Activated T-helper 1 cell treated with anti-CD3 and anti-CD28 coated beads, Interleukin-12 subunit alpha, Interleukin-12 subunit beta, Interleukin-2, Interleukin-4 antibody, amounts not matched to agents 30 ng/mL and 10 ng/mL and 1 ng/mL, durations not matched to agents 14 hours and 24 hours and 36 hours (primary cell): ENCODE measurements at regions of chr11 and their contacts with region 1.

Region 1: GRCh38 chr11:11569936-11570491 is 51.8 kb downstream of the GALNT18 start:
- DNase-seq: no peak
- H3K4me3 Mint-ChIP-seq: no peak overlapping the region
- H3K27ac Mint-ChIP-seq: no peak overlapping the region
- H3K4me1 Mint-ChIP-seq: peaks cover 30% of the 10 kb centered on the region
- H3K27me3 Mint-ChIP-seq: no peaks in the 10 kb centered on the region

Region 2: GRCh38 chr11:11519184-11519583 is 50.8 kb before region 1 on chr11:
- intact Hi-C with region 1: no loop called
- DNase-seq: no peak
- H3K4me3 Mint-ChIP-seq: no peak overlapping the region
- H3K27ac Mint-ChIP-seq: no peak overlapping the region
- H3K4me1 Mint-ChIP-seq: no peaks in the 10 kb centered on the region
- H3K27me3 Mint-ChIP-seq: no peaks in the 10 kb centered on the region

Region 3: DNA sequence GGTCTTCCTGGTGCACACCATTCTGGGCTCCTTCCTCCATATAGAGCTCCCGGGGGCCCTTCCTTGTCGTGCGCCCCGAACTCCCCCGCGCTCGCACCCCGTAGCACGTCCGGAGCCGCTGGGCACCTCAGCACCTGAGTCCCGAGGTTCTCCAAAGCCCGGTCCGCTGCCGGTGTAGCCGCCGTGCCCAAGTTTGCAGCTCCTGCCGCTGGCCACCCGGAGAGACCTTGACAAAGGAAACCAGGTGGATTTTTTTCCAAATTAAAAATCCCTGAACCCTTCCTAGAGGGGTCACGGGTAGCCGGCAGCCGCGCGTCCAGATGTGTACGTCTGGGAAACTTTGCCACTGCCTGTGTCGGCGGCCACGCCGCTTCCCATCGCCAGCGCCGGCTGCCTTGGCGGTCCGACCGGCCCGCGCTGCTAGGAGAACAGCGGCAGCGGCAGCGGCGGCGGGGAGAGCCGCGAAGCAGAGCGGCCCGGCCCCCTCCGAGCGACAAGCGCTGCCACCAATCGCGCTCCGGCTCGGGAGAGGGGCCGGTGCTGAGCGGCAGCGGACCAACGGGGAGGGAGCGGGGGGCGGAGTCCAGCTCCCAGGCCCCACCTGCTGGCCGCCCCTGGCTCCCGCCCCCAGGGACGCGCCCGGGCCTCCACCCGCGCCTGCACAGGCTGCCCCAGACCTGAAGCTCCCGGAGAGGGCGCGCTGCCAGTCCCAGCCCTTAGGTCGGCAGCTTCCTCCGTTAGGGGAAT is 51.7 kb after region 1 on chr11 and contains the start of gene GALNT18:
- intact Hi-C with region 1: loop called (anchors 2 kb)
- DNase-seq: peak; percentile 82
- H3K4me3 Mint-ChIP-seq: peak within 1 kb of the TSS; percentile 87
- H3K27ac Mint-ChIP-seq: no peak within 1 kb of the TSS
- H3K4me1 Mint-ChIP-seq: peaks cover 3% of the 10 kb centered on the region
- H3K27me3 Mint-ChIP-seq: peaks cover 45% of the 10 kb centered on the region
- total RNA-seq, gene GALNT18: 5.3 and 5.7 TPM in 2 replicates